Activated CD4-positive, alpha-beta T cell treated with anti-CD3 and anti-CD28 coated beads, Interleukin-2, amount 10 ng/mL, durations not matched to agents 24 days and 14 days (primary cell): ENCODE measurements at regions of chr18 and their contacts with region 1.

Region 1: GRCh38 chr18:32018331-32019250 is at the start of gene RNF125:
- DNase-seq: peak; percentile 98
- H3K4me3 Mint-ChIP-seq: peak within 1 kb of the TSS; percentile 98
- H3K27ac Mint-ChIP-seq: peak within 1 kb of the TSS; percentile 99
- H3K4me1 Mint-ChIP-seq: peaks cover 37% of the 10 kb centered on the region
- H3K27me3 Mint-ChIP-seq: peaks cover 8% of the 10 kb centered on the region
- total RNA-seq, gene RNF125: 32.6 and 35.0 TPM in 2 replicates

Region 2: GRCh38 chr18:31942999-31943865 is 75.4 kb before region 1 on chr18 and contains the start of gene TRAPPC8:
- intact Hi-C with region 1: loop called (anchors 1 kb)
- DNase-seq: peak; percentile 96
- H3K4me3 Mint-ChIP-seq: peak within 1 kb of the TSS; percentile 99
- H3K27ac Mint-ChIP-seq: peak within 1 kb of the TSS; percentile 99
- H3K4me1 Mint-ChIP-seq: peaks cover 35% of the 10 kb centered on the region
- H3K27me3 Mint-ChIP-seq: no peaks in the 10 kb centered on the region
- total RNA-seq, gene TRAPPC8: 32.6 and 35.0 TPM in 2 replicates

Region 3: DNA sequence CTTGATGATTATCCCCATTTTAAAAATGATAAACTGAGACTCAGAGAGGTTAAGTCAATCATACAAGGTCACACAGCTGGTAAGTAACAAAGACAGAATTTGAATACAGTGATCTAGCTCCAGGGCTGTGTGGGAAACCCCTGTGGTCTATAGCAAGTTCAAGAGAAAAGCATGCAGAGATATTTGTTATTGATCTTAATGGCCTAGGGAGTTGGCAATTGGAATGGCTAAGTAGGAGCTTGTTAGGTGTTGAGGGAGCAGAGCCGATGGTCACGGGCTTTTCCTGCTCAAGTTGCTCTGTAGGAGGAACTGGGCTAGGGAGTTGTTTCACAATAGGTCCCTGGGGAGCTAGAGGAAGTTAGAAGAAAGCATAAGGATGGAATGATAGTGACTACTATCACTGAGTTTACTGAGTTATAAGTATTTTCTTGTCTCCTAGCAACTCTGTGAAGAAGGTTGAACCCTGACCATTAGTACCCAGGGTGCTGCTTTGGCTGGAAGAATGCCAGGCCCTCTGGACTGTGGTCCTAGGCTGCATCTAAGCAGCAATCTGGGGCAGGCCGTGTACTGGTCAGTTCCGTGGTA is 30.0 kb after region 1 on chr18:
- intact Hi-C with region 1: loop called (anchors 1 kb)
- DNase-seq: peak; percentile 73
- H3K4me3 Mint-ChIP-seq: peak overlapping the region; percentile 73
- H3K27ac Mint-ChIP-seq: peak overlapping the region; percentile 95
- H3K4me1 Mint-ChIP-seq: peaks cover 38% of the 10 kb centered on the region
- H3K27me3 Mint-ChIP-seq: no peaks in the 10 kb centered on the region

Region 4: GRCh38 chr18:32092422-32093101 is 74.0 kb after region 1 on chr18:
- intact Hi-C with region 1: loop called (anchors 1 kb)
- DNase-seq: peak; percentile 100
- H3K4me3 Mint-ChIP-seq: peak overlapping the region; percentile 91
- H3K27ac Mint-ChIP-seq: peak overlapping the region; percentile 97
- H3K4me1 Mint-ChIP-seq: peaks cover 43% of the 10 kb centered on the region
- H3K27me3 Mint-ChIP-seq: no peaks in the 10 kb centered on the region